ENCODE measurements at regions of chr4 and their contacts with region 1.

Region 1: GRCh38 chr4:85778632-85779131 is 303.7 kb downstream of the ARHGAP24 start:
- DNase-seq: no peak
- H3K4me3 ChIP-seq: peak overlapping the region; percentile 43 to 58 (median 55)
- H3K27ac ChIP-seq: peak overlapping the region; percentile 73 to 82 (median 78)
- H3K4me1 ChIP-seq: peaks cover 29 to 61% (median 36%) of the 10 kb centered on the region in 4 donors
- H3K27me3 ChIP-seq: no peaks in the 10 kb centered on the region
- CTCF ChIP-seq: no peak
- EP300 ChIP-seq: no peak
- POLR2A ChIP-seq: no peak

Region 2: DNA sequence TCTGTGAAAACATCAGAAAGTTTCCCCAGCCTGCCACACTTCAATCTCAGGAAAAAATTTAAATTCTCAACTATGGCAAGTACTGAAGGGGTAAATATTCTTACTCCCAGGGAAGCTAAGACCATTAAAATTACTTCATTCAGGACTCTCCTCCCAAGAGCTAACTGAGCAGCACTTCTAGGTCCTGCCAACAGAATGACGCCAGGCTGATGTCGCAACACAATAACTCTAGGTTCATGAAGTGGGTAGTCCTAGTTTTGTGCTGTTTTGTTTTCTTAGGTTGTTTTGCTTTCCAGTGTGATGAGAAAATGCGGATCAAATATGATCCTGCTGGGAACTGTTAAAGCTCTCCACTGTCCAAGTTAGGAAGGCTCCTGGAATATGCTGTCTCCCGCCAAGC is 1459.6 kb before region 1 on chr4:
- intact Hi-C with region 1: no loop called
- DNase-seq: no peak
- H3K4me3 ChIP-seq: no peak overlapping the region
- H3K27ac ChIP-seq: no peak overlapping the region
- H3K4me1 ChIP-seq: no peaks in the 10 kb centered on the region
- H3K27me3 ChIP-seq: no peaks in the 10 kb centered on the region
- CTCF ChIP-seq: no peak
- EP300 ChIP-seq: no peak
- POLR2A ChIP-seq: no peak

Region 3: GRCh38 chr4:85747882-85748491 is 30.7 kb before region 1 on chr4:
- intact Hi-C with region 1: no loop called
- DNase-seq: no peak
- H3K4me3 ChIP-seq: no peak overlapping the region
- H3K27ac ChIP-seq: no peak overlapping the region
- H3K4me1 ChIP-seq: peaks cover 0 to 9% (median 0%) of the 10 kb centered on the region in 4 donors
- H3K27me3 ChIP-seq: no peaks in the 10 kb centered on the region
- CTCF ChIP-seq: peak; percentile 72 to 93 (median 76)
- EP300 ChIP-seq: no peak
- POLR2A ChIP-seq: no peak

Region 4: GRCh38 chr4:86032476-86033022 is 253.9 kb after region 1 on chr4:
- intact Hi-C with region 1: loop called (anchors 10 kb)
- DNase-seq: no peak
- H3K4me3 ChIP-seq: peak overlapping the region in 2 of 4 donors; percentile 11 to 20
- H3K27ac ChIP-seq: peak overlapping the region; percentile 73 to 78 (median 76)
- H3K4me1 ChIP-seq: peaks cover 22 to 32% (median 24%) of the 10 kb centered on the region in 4 donors
- H3K27me3 ChIP-seq: no peaks in the 10 kb centered on the region
- CTCF ChIP-seq: no peak
- EP300 ChIP-seq: no peak
- POLR2A ChIP-seq: no peak